HepG2 (cell line): ENCODE measurements at regions of chr6 and their contacts with region 1.

Region 1: DNA sequence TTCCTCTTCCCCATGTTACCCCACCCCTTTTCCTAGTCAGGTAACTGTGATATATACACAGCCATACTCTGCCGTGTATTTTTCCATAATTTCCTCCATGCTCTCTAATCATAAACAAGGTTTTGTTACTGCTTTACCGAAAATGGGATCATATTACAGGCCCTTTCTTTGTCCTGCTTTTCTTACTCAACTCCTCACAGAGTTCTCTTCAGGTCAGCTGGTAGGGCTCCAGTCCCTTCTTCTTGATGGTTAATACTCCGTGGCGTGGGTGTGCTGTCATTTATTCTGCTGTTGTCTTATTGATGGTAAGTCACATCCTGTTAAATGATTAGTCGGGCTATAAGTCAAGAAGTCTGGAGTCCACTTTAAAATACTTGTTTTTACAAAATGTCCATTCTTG is 24.9 kb upstream of the PI16 start:
- DNase-seq: no peak
- ATAC-seq: no peak
- H3K4me3 ChIP-seq: no peak overlapping the region
- H3K27ac ChIP-seq: no peak overlapping the region
- H3K4me1 ChIP-seq: peaks cover 11% of the 10 kb centered on the region; the same call in 1 of the 2 replicates
- H3K27me3 ChIP-seq: no peaks in the 10 kb centered on the region
- CTCF ChIP-seq: no peak
- EP300 ChIP-seq: no peak
- POLR2A ChIP-seq: no peak
- RAD21 ChIP-seq: no peak

Region 2: GRCh38 chr6:36755435-36756348 is 173.9 kb before region 1 on chr6:
- CTCF ChIA-PET with region 1: no interaction called
- POLR2A ChIA-PET with region 1: no interaction called
- in situ Hi-C with region 1: no loop called
- intact Hi-C with region 1: no loop called
- DNase-seq: peak; percentile 40
- ATAC-seq: no peak
- H3K4me3 ChIP-seq: no peak overlapping the region
- H3K27ac ChIP-seq: no peak overlapping the region
- H3K4me1 ChIP-seq: peaks cover 10% of the 10 kb centered on the region; the same call in 1 of the 2 replicates
- H3K27me3 ChIP-seq: peaks cover 2 to 74% of the 10 kb centered on the region in 2 experiments; a peak in 4 of 5 replicates
- CTCF ChIP-seq: no peak
- EP300 ChIP-seq: no peak
- POLR2A ChIP-seq: no peak
- RAD21 ChIP-seq: no peak

Region 3: DNA sequence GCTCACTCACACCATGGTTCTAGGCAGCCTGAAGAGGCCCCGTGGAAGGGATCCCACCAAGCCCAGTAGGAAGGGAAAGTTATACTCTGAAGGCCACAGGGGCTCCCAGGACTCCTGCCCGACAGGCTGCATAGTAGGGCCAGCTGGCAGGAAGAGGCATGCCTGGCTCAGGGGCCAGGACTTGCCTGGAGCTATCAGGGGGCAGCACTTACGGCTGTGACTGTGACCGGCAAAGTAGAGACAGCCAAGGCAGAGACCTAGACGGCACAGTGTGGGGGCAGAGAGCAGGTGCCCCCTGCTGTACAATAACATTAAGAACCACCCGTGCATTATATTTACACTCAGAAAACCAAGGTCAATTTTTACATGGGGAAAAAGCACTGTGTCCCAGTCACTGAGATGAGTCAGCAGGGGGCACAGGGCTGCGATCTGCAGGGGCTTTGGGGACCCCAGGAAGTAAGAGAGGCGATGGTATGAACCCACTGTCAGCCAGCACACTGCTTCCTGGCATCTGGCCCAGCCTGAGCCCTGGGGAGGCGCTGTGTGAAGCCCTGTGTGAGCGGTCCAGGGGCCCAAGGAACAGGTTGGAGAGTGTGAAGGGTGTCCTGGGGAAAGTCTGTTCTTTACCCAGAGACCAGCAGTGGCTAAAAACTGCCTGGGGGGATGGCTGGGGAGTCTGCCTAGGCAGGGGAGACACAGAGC is 560.2 kb after region 1 on chr6:
- CTCF ChIA-PET with region 1: no interaction called
- POLR2A ChIA-PET with region 1: no interaction called
- in situ Hi-C with region 1: no loop called
- intact Hi-C with region 1: loop called (anchors 5 kb)
- DNase-seq: peak; percentile 39
- ATAC-seq: peak; percentile 69
- H3K4me3 ChIP-seq: no peak overlapping the region
- H3K27ac ChIP-seq: no peak overlapping the region
- H3K4me1 ChIP-seq: peaks cover 11% of the 10 kb centered on the region
- H3K27me3 ChIP-seq: no peaks in the 10 kb centered on the region
- CTCF ChIP-seq: peak; percentile 53
- EP300 ChIP-seq: no peak
- POLR2A ChIP-seq: no peak
- RAD21 ChIP-seq: no peak; the same call in 1 of the 2 replicates